Activated CD4-positive, alpha-beta T cell treated with anti-CD3 and anti-CD28 coated beads for 36 hours (primary cell): ENCODE measurements at regions of chr1 and their contacts with region 1.

Region 1: GRCh38 chr1:198465201-198466144 is 75.0 kb downstream of the ATP6V1G3 start:
- DNase-seq: no peak
- ATAC-seq: peak; percentile 74
- H3K4me3 Mint-ChIP-seq: no peak overlapping the region
- H3K27ac Mint-ChIP-seq: peak overlapping the region; percentile 58
- H3K4me1 Mint-ChIP-seq: peaks cover 20% of the 10 kb centered on the region
- H3K27me3 Mint-ChIP-seq: no peaks in the 10 kb centered on the region

Region 2: DNA sequence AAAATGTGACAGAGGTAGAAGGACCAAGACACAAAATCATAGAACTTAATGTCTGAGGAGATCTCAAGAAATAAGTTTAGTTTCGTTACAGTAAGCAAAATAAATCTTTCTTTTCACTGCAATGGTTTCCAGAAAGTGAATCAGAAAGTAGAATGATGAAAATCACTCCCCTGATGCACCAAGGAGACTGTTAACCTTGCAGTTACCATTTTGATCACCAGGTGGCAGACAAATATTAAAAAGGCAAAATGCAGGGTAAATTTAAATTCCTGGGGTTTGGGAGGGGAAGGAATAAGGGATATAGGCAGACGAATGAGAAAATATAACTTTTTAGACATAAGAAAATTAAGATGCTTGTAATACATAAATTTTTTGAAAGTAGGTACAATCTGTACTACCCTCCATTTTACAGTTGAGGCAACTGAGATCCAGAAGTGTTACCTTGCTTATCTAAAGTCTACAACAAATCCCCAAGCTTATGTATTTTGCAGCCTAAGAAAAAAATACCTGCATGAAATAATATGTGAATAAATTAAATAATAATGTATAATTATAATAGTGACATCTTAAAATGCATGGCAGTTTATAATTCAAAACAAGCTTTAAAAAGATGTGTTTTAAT is 944.2 kb before region 1 on chr1:
- CTCF ChIA-PET with region 1: interaction called, 3 read pairs
- POLR2A ChIA-PET with region 1: no interaction called
- intact Hi-C with region 1: loop called (anchors 5 to 10 kb)
- DNase-seq: peak; percentile 13
- ATAC-seq: peak; percentile 65
- H3K4me3 Mint-ChIP-seq: no peak overlapping the region
- H3K27ac Mint-ChIP-seq: no peak overlapping the region
- H3K4me1 Mint-ChIP-seq: peaks cover 6% of the 10 kb centered on the region
- H3K27me3 Mint-ChIP-seq: no peaks in the 10 kb centered on the region

Region 3: DNA sequence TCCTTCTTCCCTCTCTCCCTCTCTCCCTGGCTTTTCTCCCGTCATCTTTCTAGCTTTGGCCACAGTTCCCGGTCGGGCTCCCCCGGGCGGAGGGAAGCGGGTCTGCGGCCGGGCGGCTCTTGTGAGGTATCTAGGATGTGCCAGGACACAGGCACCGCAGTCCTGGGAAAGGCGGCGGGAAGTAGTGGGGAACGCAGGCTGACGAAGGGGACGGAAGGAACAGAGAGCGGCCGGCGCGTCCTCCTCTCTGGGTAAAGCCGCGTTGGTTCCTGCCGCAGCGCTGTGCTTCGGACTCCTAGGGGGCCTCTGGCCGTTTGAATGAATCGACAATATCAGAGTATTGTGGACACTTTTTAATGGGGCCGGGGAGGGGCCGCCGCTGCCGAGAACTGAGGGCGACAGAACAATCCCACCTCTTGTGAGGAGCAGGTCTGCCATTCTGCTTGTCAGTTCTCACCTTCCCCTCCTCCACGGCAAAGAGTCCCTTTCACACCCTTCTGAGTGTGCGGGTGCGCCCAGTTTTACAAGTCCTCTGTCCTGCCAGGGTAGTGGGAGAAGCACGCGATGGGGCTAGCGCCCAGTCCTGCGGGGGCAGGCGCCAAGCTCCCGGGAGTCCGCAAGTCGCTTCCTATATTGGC is 549.5 kb before region 1 on chr1:
- CTCF ChIA-PET with region 1: no interaction called
- POLR2A ChIA-PET with region 1: no interaction called
- intact Hi-C with region 1: loop called in 1 of 2 experiments (anchors 5 kb)
- DNase-seq: peak; percentile 29
- ATAC-seq: no peak
- H3K4me3 Mint-ChIP-seq: peak overlapping the region; percentile 67
- H3K27ac Mint-ChIP-seq: no peak overlapping the region
- H3K4me1 Mint-ChIP-seq: peaks cover 72% of the 10 kb centered on the region
- H3K27me3 Mint-ChIP-seq: peaks cover 96% of the 10 kb centered on the region

Region 4: DNA sequence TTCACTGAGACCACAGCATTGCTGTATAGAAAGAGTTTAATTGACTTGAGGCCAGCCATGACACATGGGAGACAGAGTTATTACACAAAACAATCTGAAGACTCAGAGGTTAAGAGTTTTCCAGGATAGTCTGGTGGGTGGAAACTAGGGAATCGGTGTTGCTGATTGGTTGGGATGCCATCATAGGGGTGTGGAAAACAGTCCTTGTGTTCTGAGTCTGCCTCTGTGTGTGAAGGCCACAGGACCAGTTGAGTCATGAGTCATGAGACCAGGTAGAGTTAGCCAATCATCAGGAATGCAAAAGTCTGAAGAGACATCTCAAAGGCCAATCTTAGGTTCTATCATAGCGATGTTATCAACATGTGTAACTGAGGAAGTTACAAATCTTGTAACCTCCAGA is 358.4 kb before region 1 on chr1:
- CTCF ChIA-PET with region 1: no interaction called
- POLR2A ChIA-PET with region 1: no interaction called
- intact Hi-C with region 1: no loop called
- DNase-seq: no peak
- ATAC-seq: no peak
- H3K4me3 Mint-ChIP-seq: no peak overlapping the region
- H3K27ac Mint-ChIP-seq: no peak overlapping the region
- H3K4me1 Mint-ChIP-seq: peaks cover 13% of the 10 kb centered on the region
- H3K27me3 Mint-ChIP-seq: no peaks in the 10 kb centered on the region

Region 5: DNA sequence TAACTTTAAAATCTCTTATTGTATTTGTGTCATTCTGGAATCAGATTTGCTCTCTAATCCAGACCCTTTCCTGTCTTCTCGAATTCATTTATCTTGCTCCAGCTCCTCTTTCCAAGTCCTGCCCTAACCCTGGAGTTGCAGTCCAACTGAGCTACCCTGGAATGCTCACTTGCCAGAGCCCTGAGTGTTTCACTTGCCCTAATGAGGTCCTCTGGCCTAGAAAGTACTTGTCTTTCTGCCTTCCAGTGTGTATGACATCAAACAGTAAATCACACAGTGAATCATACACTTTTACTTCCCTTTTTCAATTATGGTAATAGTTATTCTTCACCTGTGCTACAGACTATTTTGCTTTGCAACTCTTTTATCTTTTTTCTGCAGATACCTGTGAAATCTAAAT is 211.8 kb before region 1 on chr1:
- CTCF ChIA-PET with region 1: no interaction called
- POLR2A ChIA-PET with region 1: no interaction called
- intact Hi-C with region 1: loop called (anchors 1 to 2 kb)
- DNase-seq: peak; percentile 22
- ATAC-seq: peak; percentile 88
- H3K4me3 Mint-ChIP-seq: peak overlapping the region; percentile 16
- H3K27ac Mint-ChIP-seq: peak overlapping the region; percentile 79
- H3K4me1 Mint-ChIP-seq: peaks cover 50% of the 10 kb centered on the region
- H3K27me3 Mint-ChIP-seq: peaks cover 2% of the 10 kb centered on the region

Region 6: GRCh38 chr1:198713081-198713480 is 247.6 kb after region 1 on chr1:
- CTCF ChIA-PET with region 1: no interaction called
- POLR2A ChIA-PET with region 1: no interaction called
- intact Hi-C with region 1: loop called in 1 of 2 experiments (anchors 5 kb)
- DNase-seq: no peak
- ATAC-seq: peak; percentile 66
- H3K4me3 Mint-ChIP-seq: no peak overlapping the region
- H3K27ac Mint-ChIP-seq: peak overlapping the region; percentile 63
- H3K4me1 Mint-ChIP-seq: peaks cover 53% of the 10 kb centered on the region
- H3K27me3 Mint-ChIP-seq: no peaks in the 10 kb centered on the region